A549 (cell line): ENCODE measurements at regions of chr11 and their contacts with region 1.

Region 1: DNA sequence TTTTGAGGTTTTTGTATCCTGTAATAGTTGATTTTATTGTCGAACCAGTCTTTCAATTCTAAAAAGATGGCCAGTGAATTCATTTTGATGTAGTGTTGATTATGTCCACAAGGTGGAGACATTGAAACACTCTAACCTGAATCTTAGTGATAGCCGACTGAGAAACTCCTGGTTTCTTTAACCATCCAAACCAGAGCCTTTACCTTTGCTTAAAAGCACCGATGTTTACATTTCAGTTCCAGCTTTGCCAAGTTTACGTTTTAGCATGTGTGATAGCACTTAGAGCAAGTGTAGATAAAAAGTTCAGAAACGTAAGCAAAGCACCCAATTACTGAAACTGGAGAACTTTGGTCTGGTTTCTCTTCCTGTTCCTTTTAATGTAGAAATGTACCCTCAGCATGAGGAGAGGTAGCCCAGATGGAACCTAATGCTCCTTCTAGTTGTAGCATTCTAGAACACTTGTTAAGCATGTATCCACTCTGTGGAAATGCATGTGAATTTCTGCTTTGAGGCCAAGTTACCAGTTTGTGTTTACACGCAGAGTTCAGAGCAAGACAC is 208.6 kb downstream of the DBX1 start:
- DNase-seq: peak; percentile 35 to 64
- ATAC-seq: peak; percentile 56 to 58; a peak in 4 of 6 replicates
- H3K4me3 ChIP-seq: no peak overlapping the region
- H3K27ac ChIP-seq: peak overlapping the region; percentile 79 to 86
- H3K4me1 ChIP-seq: peaks cover 41% of the 10 kb centered on the region
- CTCF ChIP-seq: peak; percentile 87
- EP300 ChIP-seq: no peak
- POLR2A ChIP-seq: no peak
- RAD21 ChIP-seq: peak; percentile 79 to 89

Region 2: GRCh38 chr11:19919050-19919561 is 32.5 kb before region 1 on chr11:
- CTCF ChIA-PET with region 1: interaction called, 11 read pairs
- POLR2A ChIA-PET with region 1: no interaction called
- DNase-seq: peak; percentile 32 to 82
- ATAC-seq: peak; percentile 97 to 98
- H3K4me3 ChIP-seq: no peak overlapping the region
- H3K27ac ChIP-seq: peak overlapping the region; percentile 42 to 71; a peak in 5 of 6 replicates
- H3K4me1 ChIP-seq: peaks cover 33% of the 10 kb centered on the region
- CTCF ChIP-seq: no peak
- EP300 ChIP-seq: no peak
- POLR2A ChIP-seq: no peak
- RAD21 ChIP-seq: no peak

Region 3: GRCh38 chr11:19962801-19963175 is 11.2 kb after region 1 on chr11:
- CTCF ChIA-PET with region 1: interaction called, 18 read pairs
- POLR2A ChIA-PET with region 1: no interaction called
- DNase-seq: no peak
- ATAC-seq: no peak; a peak in 2 of 6 replicates
- H3K4me3 ChIP-seq: no peak overlapping the region
- H3K27ac ChIP-seq: peak overlapping the region in 1 of 2 experiments; percentile 47; a peak in 3 of 6 replicates
- H3K4me1 ChIP-seq: peaks cover 4% of the 10 kb centered on the region; the same call in 2 of the 3 replicates
- CTCF ChIP-seq: no peak
- EP300 ChIP-seq: no peak
- POLR2A ChIP-seq: no peak
- RAD21 ChIP-seq: no peak

Region 4: DNA sequence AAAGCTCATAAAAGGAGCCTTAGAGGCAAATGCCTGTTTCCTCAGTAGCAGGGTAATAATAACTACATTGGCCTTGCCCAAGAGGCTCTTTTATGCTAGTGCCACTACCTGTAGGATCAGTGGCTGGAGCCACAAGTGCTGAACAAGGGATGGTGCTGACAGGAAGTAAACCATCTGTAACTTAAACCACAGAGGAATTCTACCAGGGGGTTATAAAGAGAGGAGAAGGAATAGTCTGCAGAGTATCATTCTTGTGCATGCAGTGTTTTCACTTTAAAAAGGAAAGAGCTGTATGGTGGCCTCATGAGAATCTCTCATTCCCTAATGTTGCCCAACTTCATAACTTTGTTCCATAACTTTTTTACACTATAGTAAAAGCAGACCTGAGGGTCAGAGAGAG is 40.5 kb after region 1 on chr11:
- CTCF ChIA-PET with region 1: interaction called, 10 read pairs
- POLR2A ChIA-PET with region 1: no interaction called
- DNase-seq: no peak
- ATAC-seq: no peak
- H3K4me3 ChIP-seq: no peak overlapping the region
- H3K27ac ChIP-seq: peak overlapping the region; percentile 45 to 99; a peak in 2 of 6 replicates
- H3K4me1 ChIP-seq: peaks cover 49% of the 10 kb centered on the region
- CTCF ChIP-seq: no peak
- EP300 ChIP-seq: no peak
- POLR2A ChIP-seq: no peak
- RAD21 ChIP-seq: no peak

Region 5: DNA sequence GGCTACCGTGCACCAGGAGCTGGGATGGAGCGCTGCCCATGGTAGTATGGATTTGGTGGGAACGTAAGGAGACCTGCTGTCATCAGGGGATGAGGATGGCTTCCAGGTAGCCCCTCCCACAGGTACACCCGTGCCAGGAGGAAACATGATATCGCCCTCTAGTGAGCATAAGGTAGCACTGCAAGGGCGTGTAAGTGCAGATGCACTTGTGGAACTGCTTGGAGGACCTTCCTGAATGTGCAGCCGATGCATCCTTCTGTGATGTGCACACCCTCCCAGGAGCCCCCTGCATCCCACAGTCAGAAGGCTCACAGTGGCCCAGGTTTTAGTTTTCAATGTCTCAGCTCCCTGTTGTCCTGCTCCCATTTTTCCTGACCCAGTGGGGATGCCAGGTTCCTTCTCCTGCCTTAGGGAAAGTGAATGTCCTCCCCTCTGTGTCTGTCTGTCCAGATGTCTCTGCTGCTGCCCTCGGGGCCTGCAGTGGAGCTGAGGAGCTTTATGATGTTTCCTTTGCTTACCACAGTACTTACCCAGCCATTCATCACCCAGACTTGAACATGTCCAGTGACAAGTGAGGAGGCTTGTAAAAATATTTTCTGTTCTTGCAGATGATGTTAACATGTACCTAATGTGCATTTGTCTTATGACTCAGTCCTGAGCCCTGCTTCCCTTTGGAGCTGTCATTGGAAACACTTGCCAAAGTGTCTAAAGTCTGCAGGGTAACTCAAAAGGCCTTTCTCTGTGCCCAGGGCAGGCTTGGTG is 159.5 kb after region 1 on chr11:
- CTCF ChIA-PET with region 1: interaction called, 108 read pairs
- POLR2A ChIA-PET with region 1: interaction called, 9 read pairs
- DNase-seq: peak; percentile 70 to 85
- ATAC-seq: peak; percentile 56 to 78
- H3K4me3 ChIP-seq: no peak overlapping the region
- H3K27ac ChIP-seq: peak overlapping the region; percentile 98
- H3K4me1 ChIP-seq: peaks cover 42% of the 10 kb centered on the region
- CTCF ChIP-seq: peak; percentile 83
- EP300 ChIP-seq: no peak; a peak in 1 of 5 replicates
- POLR2A ChIP-seq: no peak
- RAD21 ChIP-seq: peak; percentile 73 to 81

Region 6: DNA sequence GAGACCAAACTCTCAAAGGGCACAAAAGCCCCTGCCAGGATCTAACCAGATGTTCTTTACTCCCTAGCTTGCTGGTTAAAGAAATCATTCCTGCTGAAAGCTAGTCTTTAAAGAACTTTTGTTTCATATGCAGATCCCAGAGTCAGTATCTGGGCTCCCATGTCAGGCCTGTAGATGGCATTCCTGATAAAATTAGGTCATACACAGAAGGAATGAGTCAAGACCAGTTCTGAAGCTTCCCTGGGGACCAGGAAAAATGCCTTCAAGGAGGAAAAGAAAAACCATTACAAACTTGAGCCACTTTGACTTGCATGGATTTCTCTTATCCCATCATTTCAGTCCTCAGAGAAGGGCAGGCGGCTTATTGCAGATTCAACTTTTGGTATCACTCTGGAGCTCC is 202.7 kb after region 1 on chr11:
- CTCF ChIA-PET with region 1: interaction called, 10 read pairs
- POLR2A ChIA-PET with region 1: no interaction called
- DNase-seq: no peak
- ATAC-seq: 0 out of 6 replicates have a peak, but pooled peaks of 1 of the 2 experiments have one; percentile 30
- H3K4me3 ChIP-seq: no peak overlapping the region
- H3K27ac ChIP-seq: no peak overlapping the region
- H3K4me1 ChIP-seq: peaks cover 5% of the 10 kb centered on the region; the same call in 2 of the 3 replicates
- CTCF ChIP-seq: no peak
- EP300 ChIP-seq: no peak
- POLR2A ChIP-seq: no peak
- RAD21 ChIP-seq: no peak